GM12878 (cell line): ENCODE measurements at regions of chr21 and their contacts with region 1.

Region 1: DNA sequence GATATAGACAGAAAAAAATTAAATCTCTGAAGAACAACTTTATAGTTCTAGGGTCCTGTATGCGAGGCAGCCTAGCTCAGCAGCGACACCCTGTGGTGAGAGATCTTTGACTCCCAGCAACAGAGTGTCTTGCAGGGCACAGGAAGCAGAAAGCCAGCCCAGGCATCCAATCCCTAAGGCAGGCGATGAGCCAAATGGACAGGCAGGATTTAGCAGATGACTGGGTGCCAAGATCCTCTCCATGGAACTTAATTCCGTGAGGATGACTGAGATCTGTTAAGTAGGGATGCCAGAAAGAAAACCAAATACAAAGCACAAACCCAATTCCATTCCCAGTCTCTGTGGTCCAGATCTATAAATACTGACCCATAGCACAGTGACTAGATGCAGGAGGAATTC is 38.8 kb downstream of the HLCS start:
- DNase-seq: peak; percentile 12
- ATAC-seq: peak; percentile 98
- H3K4me3 ChIP-seq: no peak overlapping the region
- H3K27ac ChIP-seq: no peak overlapping the region
- H3K4me1 ChIP-seq: no peaks in the 10 kb centered on the region
- H3K27me3 ChIP-seq: no peaks in the 10 kb centered on the region
- CTCF ChIP-seq: peak; percentile 86 to 92 (median 89)
- EP300 ChIP-seq: no peak
- POLR2A ChIP-seq: no peak
- RAD21 ChIP-seq: peak; percentile 94

Region 2: DNA sequence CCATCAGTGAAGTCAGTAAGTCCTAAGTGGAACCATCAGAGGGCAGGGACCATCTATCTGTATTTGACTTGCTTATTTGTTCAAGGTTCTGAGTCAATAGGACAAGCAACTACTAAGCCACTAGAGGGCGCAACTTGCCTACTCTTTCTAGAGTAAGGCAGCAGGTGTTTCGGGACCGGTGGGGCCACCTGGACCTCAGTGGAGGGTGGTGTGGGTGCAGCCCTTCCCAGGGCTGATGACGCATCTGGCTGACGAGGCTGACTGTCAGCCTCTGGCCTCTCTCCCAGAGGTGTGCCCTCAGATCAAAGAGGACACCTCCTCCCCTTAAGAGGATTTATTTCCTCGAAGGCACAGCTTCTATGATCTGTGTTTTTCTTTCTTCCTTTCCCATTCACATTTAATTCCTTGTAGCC is 786.2 kb before region 1 on chr21:
- CTCF ChIA-PET with region 1: interaction called, 3 read pairs
- POLR2A ChIA-PET with region 1: no interaction called
- RAD21 ChIA-PET with region 1: no interaction called
- SMC1A ChIA-PET with region 1: no interaction called
- in situ Hi-C with region 1: no loop called
- intact Hi-C with region 1: loop called (anchors 10 kb)
- DNase-seq: peak; percentile 53
- ATAC-seq: peak; percentile 98
- H3K4me3 ChIP-seq: no peak overlapping the region
- H3K27ac ChIP-seq: no peak overlapping the region
- H3K4me1 ChIP-seq: peaks cover 1% of the 10 kb centered on the region; the same call in 1 of the 2 replicates
- H3K27me3 ChIP-seq: peaks cover 0 to 1% of the 10 kb centered on the region in 2 experiments; a peak in 1 of 4 replicates
- CTCF ChIP-seq: peak; percentile 74 to 93 (median 85)
- EP300 ChIP-seq: no peak
- POLR2A ChIP-seq: no peak
- RAD21 ChIP-seq: peak; percentile 96

Region 3: GRCh38 chr21:36917471-36918158 is 10.1 kb before region 1 on chr21:
- CTCF ChIA-PET with region 1: interaction called, 11 read pairs
- POLR2A ChIA-PET with region 1: no interaction called
- RAD21 ChIA-PET with region 1: no interaction called
- SMC1A ChIA-PET with region 1: no interaction called
- in situ Hi-C with region 1: no loop called
- intact Hi-C with region 1: no loop called
- DNase-seq: no peak
- ATAC-seq: peak; percentile 22; the same call in 1 of the 3 replicates
- H3K4me3 ChIP-seq: no peak overlapping the region
- H3K27ac ChIP-seq: no peak overlapping the region
- H3K4me1 ChIP-seq: no peaks in the 10 kb centered on the region
- H3K27me3 ChIP-seq: no peaks in the 10 kb centered on the region
- CTCF ChIP-seq: peak; percentile 30 to 38 (median 37); a peak in 4 of 6 replicates
- EP300 ChIP-seq: no peak
- POLR2A ChIP-seq: no peak
- RAD21 ChIP-seq: peak; percentile 23; the same call in 1 of the 2 replicates